CD8-positive, alpha-beta memory T cell (primary cell): ENCODE measurements at regions of chr12 and their contacts with region 1.

Region 1: DNA sequence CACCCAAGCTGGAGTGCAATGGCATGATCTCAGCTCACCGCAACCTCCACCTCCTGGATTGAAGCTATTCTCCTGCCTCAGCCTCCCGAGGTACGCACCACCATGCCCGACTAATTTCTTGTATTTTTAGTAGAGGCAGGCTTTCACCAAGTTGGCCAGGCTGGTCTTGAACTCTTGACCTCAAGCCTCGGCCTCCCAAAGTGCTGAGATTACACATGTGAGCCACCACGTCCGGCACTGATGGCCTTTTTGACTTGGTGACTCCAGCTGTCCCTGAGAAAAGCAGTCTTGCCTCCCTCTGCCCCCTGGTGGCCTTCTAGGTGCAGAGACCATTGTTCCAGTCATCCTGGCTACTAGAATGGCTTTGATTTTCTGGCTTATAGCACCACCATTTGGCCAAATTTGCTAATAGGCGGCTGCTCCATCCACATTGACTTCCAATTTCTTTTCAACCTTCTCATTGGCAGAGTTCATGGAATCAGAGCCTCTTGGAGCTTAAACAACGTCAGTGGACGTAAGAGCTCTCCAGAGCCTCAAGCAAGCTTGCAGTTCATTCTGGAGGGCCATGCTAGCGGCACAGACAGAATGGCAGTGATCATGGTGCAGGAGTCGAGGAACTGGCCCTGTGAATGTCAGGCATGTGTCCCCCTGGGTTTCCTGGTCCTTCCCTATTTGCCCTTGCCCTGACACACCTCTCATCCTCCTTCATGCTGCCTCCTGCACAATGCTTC is 25.4 kb upstream of the EIF4B start:
- DNase-seq: peak; percentile 65 to 87 (median 74)
- H3K4me3 ChIP-seq: no peak overlapping the region
- H3K4me3 Mint-ChIP-seq: no peak overlapping the region
- H3K27ac ChIP-seq: no peak overlapping the region
- H3K27ac Mint-ChIP-seq: no peak overlapping the region
- H3K4me1 ChIP-seq: no peaks in the 10 kb centered on the region
- H3K4me1 Mint-ChIP-seq: peaks cover 0 to 2% (median 0%) of the 10 kb centered on the region in 3 donors
- H3K27me3 ChIP-seq: no peaks in the 10 kb centered on the region
- H3K27me3 Mint-ChIP-seq: peaks cover 33 to 60% of the 10 kb centered on the region in 2 donors

Region 2: GRCh38 chr12:52870351-52871290 is 110.2 kb before region 1 on chr12:
- CTCF ChIA-PET with region 1: interaction called, 11 read pairs
- POLR2A ChIA-PET with region 1: no interaction called
- DNase-seq: peak; percentile 59 to 83 (median 69)
- H3K4me3 ChIP-seq: no peak overlapping the region
- H3K4me3 Mint-ChIP-seq: no peak overlapping the region
- H3K27ac ChIP-seq: no peak overlapping the region
- H3K27ac Mint-ChIP-seq: peak overlapping the region in 5 of 8 donors; percentile 6 to 77 (median 43)
- H3K4me1 ChIP-seq: peaks cover 28% of the 10 kb centered on the region
- H3K4me1 Mint-ChIP-seq: peaks cover 21 to 33% (median 33%) of the 10 kb centered on the region in 3 donors
- H3K27me3 ChIP-seq: no peaks in the 10 kb centered on the region
- H3K27me3 Mint-ChIP-seq: no peaks in the 10 kb centered on the region

Region 3: GRCh38 chr12:52949413-52950331 is 31.2 kb before region 1 on chr12:
- CTCF ChIA-PET with region 1: interaction called, 10 read pairs
- POLR2A ChIA-PET with region 1: no interaction called
- DNase-seq: no peak
- H3K4me3 ChIP-seq: peak overlapping the region; percentile 46
- H3K4me3 Mint-ChIP-seq: peak overlapping the region; percentile 60 to 88 (median 70)
- H3K27ac ChIP-seq: peak overlapping the region; percentile 78
- H3K27ac Mint-ChIP-seq: peak overlapping the region in 4 of 8 donors; percentile 33 to 71 (median 42)
- H3K4me1 ChIP-seq: peaks cover 7% of the 10 kb centered on the region
- H3K4me1 Mint-ChIP-seq: peaks cover 4 to 9% (median 4%) of the 10 kb centered on the region in 3 donors
- H3K27me3 ChIP-seq: no peaks in the 10 kb centered on the region
- H3K27me3 Mint-ChIP-seq: peaks cover 10 to 17% of the 10 kb centered on the region in 2 donors

Region 4: GRCh38 chr12:52969828-52970569 is 10.9 kb before region 1 on chr12:
- CTCF ChIA-PET with region 1: interaction called, 12 read pairs
- POLR2A ChIA-PET with region 1: no interaction called
- DNase-seq: no peak
- H3K4me3 ChIP-seq: no peak overlapping the region
- H3K4me3 Mint-ChIP-seq: no peak overlapping the region
- H3K27ac ChIP-seq: no peak overlapping the region
- H3K27ac Mint-ChIP-seq: no peak overlapping the region
- H3K4me1 ChIP-seq: no peaks in the 10 kb centered on the region
- H3K4me1 Mint-ChIP-seq: no peaks in the 10 kb centered on the region
- H3K27me3 ChIP-seq: no peaks in the 10 kb centered on the region
- H3K27me3 Mint-ChIP-seq: peaks cover 8 to 22% of the 10 kb centered on the region in 2 donors

Region 5: DNA sequence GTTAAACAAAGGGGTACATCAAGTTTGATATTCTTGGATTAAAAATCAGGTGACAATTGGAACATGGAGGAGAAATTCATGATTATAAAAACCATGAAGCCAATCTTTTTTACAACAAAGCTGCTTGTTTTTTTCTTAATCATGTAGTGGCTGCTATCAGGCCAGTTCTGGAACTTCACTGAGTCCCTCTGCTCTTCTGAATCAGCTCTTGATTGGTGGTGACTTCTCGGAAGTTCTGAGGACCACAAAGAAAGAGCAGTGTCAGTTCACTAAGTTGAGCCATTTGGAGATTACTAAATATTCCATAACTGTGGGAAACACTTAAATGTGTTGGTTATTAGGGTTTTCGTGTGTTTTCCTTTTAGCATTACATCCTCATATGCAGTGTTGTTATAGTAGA is 33.9 kb after region 1 on chr12:
- CTCF ChIA-PET with region 1: no interaction called
- POLR2A ChIA-PET with region 1: no interaction called
- DNase-seq: no peak
- H3K4me3 ChIP-seq: no peak overlapping the region
- H3K4me3 Mint-ChIP-seq: no peak overlapping the region
- H3K27ac ChIP-seq: no peak overlapping the region
- H3K27ac Mint-ChIP-seq: peak overlapping the region in 7 of 8 donors; percentile 1 to 55 (median 46)
- H3K4me1 ChIP-seq: peaks cover 23% of the 10 kb centered on the region
- H3K4me1 Mint-ChIP-seq: peaks cover 41 to 58% (median 46%) of the 10 kb centered on the region in 3 donors
- H3K27me3 ChIP-seq: no peaks in the 10 kb centered on the region
- H3K27me3 Mint-ChIP-seq: no peaks in the 10 kb centered on the region

Region 6: DNA sequence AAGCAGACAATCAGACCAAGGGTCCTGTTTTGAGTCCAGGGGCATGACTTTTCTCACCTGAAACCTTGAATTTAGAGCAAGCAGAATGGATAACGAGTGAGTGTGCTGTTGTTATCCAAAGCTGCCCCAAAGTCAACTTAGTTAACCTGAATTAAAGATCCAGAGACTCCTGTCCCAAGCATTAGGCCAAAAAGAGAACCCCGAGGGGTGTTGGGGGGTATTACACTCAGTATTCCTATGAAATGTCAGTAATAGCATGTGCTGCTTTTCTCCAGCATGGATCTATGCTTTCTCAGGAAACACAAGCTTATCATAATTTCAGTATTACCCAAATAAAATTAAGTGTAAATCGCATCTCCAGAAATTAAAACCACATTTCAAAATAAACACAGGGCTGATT is 44.4 kb after region 1 on chr12:
- CTCF ChIA-PET with region 1: no interaction called
- POLR2A ChIA-PET with region 1: no interaction called
- DNase-seq: no peak
- H3K4me3 ChIP-seq: no peak overlapping the region
- H3K4me3 Mint-ChIP-seq: no peak overlapping the region
- H3K27ac ChIP-seq: no peak overlapping the region
- H3K27ac Mint-ChIP-seq: peak overlapping the region in 1 of 8 donors; percentile 14
- H3K4me1 ChIP-seq: no peaks in the 10 kb centered on the region
- H3K4me1 Mint-ChIP-seq: peaks cover 0 to 6% (median 2%) of the 10 kb centered on the region in 3 donors
- H3K27me3 ChIP-seq: no peaks in the 10 kb centered on the region
- H3K27me3 Mint-ChIP-seq: no peaks in the 10 kb centered on the region

Region 7: DNA sequence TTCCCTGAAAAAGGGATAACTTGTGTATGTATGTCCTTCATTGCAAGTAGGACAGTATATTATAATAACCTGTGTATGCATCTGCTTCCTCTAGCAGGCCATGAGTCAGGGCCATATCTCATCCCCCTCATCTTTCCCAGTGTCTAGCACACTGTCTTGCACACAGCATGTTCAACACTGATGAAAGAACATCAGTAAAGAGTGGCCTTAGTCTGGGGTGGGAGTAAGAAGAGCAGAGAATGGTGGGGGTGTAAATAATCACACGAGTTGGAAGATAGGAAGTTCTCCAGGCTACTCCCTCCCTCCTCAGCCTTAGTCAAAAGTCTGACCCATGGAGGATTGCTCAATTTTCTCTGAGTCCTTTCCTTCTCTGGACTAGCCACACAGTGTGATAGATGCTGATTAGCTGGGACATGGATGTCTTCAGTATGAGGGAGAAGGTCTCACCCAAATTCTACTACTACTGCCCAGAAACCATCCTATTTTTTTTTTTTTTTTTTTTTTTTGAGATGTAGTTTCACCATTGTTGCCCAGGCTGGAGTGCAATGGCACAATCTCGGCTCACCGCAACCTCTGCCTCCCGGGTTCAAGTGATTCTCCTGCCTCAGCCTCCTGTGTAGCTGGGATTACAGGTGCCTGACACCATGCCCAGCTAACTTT is 384.5 kb after region 1 on chr12:
- CTCF ChIA-PET with region 1: no interaction called
- POLR2A ChIA-PET with region 1: no interaction called
- DNase-seq: no peak
- H3K4me3 ChIP-seq: no peak overlapping the region
- H3K4me3 Mint-ChIP-seq: peak overlapping the region in 1 of 7 donors; percentile 40
- H3K27ac ChIP-seq: no peak overlapping the region
- H3K27ac Mint-ChIP-seq: peak overlapping the region in 3 of 8 donors; percentile 8 to 23 (median 13)
- H3K4me1 ChIP-seq: peaks cover 3% of the 10 kb centered on the region
- H3K4me1 Mint-ChIP-seq: peaks cover 2 to 9% (median 2%) of the 10 kb centered on the region in 3 donors
- H3K27me3 ChIP-seq: no peaks in the 10 kb centered on the region
- H3K27me3 Mint-ChIP-seq: no peaks in the 10 kb centered on the region